B cell (primary cell): ENCODE measurements at regions of chr3 and their contacts with region 1.

Region 1: DNA sequence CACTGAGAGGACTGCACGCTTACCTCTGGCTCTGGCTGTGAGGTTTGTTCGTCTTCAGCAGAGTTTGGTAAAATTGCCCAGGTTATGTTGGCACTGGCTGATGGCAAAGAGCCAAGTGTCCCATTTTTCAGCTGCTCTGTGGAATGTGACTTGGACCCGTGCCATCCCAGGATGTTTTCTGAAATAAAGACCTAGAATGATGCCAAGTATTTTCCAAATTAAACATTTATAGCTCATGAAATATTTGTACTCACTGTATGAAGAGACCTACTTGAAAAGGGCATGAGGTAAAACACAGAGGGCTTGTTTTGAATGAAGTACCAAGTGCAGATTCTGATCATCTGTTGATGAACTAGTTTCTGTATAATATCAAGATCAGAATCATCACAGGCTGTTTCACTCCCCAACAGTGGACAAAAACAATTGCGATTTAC is 200.5 kb downstream of the STT3B start:
- DNase-seq: no peak
- ATAC-seq: no peak
- H3K4me3 ChIP-seq: no peak overlapping the region
- H3K4me3 Mint-ChIP-seq: no peak overlapping the region
- H3K27ac ChIP-seq: no peak overlapping the region
- H3K27ac Mint-ChIP-seq: no peak overlapping the region
- H3K4me1 ChIP-seq: no peaks in the 10 kb centered on the region
- H3K4me1 Mint-ChIP-seq: peaks cover 4% of the 10 kb centered on the region
- H3K27me3 ChIP-seq: no peaks in the 10 kb centered on the region
- H3K27me3 Mint-ChIP-seq: no peaks in the 10 kb centered on the region
- CTCF ChIP-seq: no peak

Region 2: DNA sequence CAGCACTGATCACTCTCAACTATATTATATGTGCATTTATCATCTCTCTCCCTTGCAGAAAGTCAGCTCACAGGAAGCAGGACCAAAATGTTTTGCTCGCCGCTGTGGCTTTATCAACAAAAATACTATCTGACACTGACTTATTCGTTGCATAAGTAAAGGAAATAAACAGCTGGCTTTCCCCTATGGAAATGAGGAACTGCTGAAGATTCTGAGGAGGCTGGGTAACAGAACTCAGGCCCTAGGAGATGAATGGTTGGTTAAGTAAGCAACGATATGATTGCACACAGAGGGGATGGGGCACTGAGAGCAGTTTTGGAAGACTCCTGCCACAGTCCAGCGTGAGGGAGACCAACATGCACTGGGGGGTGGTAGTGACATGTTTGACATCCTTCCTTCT is 19.4 kb before region 1 on chr3:
- CTCF ChIA-PET with region 1: no interaction called
- POLR2A ChIA-PET with region 1: no interaction called
- intact Hi-C with region 1: no loop called
- DNase-seq: no peak
- ATAC-seq: no peak
- H3K4me3 ChIP-seq: no peak overlapping the region
- H3K4me3 Mint-ChIP-seq: no peak overlapping the region
- H3K27ac ChIP-seq: no peak overlapping the region
- H3K27ac Mint-ChIP-seq: peak overlapping the region; percentile 73
- H3K4me1 ChIP-seq: peaks cover 14 to 37% of the 10 kb centered on the region in 2 donors
- H3K4me1 Mint-ChIP-seq: peaks cover 69% of the 10 kb centered on the region
- H3K27me3 ChIP-seq: no peaks in the 10 kb centered on the region
- H3K27me3 Mint-ChIP-seq: no peaks in the 10 kb centered on the region
- CTCF ChIP-seq: no peak

Region 3: DNA sequence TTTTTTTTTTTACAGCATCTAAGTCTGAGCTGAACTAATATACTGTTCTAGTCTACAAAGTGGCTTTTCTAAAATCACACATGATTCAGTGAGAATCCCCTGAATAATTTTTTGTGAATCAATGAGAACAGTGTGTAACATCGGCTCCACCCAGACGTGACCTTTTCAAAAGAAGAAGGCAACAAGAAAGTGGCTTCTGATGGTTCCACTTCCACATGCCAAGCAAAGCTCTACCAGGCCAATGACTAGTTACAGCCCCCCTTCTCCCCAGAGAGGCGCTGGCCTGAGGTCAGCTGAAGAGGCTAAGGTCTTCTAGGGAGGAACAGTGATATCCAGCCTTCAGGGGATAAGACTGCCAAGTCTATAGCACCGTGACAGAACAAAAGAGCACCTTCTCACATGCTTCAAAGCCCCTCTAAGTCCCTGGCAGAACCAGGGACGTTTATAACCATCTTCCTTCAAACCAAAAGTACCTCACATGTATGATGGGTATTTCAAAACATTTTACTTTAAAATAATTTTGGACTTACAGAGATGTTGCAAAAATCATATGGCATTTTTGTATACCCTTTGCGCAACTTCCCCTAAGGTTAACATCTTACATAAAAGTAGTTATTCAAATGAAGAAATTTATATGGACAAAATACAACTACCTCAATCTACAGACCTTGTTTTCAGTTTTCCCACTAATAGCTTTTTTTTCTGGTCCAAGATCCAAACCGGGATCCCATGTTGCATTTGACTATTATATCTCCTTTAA is 69.9 kb after region 1 on chr3:
- CTCF ChIA-PET with region 1: no interaction called
- POLR2A ChIA-PET with region 1: interaction called, 11 read pairs
- intact Hi-C with region 1: no loop called
- DNase-seq: peak; percentile 26
- ATAC-seq: peak; percentile 87
- H3K4me3 ChIP-seq: no peak overlapping the region
- H3K4me3 Mint-ChIP-seq: peak overlapping the region; percentile 19
- H3K27ac ChIP-seq: peak overlapping the region in 1 of 2 donors; percentile 56
- H3K27ac Mint-ChIP-seq: peak overlapping the region; percentile 78
- H3K4me1 ChIP-seq: peaks cover 12 to 13% of the 10 kb centered on the region in 2 donors
- H3K4me1 Mint-ChIP-seq: peaks cover 52% of the 10 kb centered on the region
- H3K27me3 ChIP-seq: no peaks in the 10 kb centered on the region
- H3K27me3 Mint-ChIP-seq: no peaks in the 10 kb centered on the region
- CTCF ChIP-seq: no peak